Uterus (tissue), 4 donors: ENCODE measurements at regions of chr3 and their contacts with region 1.

Region 1: DNA sequence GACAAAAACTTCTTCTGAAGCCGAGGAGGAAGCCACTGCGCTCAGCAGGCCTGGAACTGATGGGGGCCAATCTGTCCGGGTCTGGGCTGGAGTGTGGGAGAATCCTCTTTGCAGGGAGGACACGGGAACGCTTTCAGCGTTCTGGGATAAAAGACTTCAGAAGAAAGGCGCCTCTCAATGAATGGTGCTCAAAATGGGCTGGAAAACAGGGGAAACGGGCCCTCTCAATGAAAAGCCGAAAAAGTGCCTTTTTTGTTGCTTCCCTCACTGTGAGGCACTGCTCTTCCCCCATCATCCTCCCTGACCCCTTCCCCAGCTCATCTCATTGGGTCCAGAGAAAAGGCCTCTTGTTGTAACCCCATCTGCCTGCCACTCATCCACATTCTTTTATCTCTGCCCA is 119.5 kb upstream of the LRIG1 start:
- DNase-seq: no peak
- H3K4me3 ChIP-seq: no peak overlapping the region
- H3K27ac ChIP-seq: no peak overlapping the region
- H3K4me1 ChIP-seq: no peaks in the 10 kb centered on the region
- H3K27me3 ChIP-seq: no peaks in the 10 kb centered on the region
- CTCF ChIP-seq: no peak
- POLR2A ChIP-seq: no peak

Region 2: GRCh38 chr3:64691051-64691450 is 1929.2 kb before region 1 on chr3:
- intact Hi-C with region 1: loop called (anchors 5 kb)
- DNase-seq: peak in 1 of 2 donors; percentile 54
- H3K4me3 ChIP-seq: no peak overlapping the region
- H3K27ac ChIP-seq: peak overlapping the region; percentile 12 to 20
- H3K4me1 ChIP-seq: peaks cover 0 to 5% of the 10 kb centered on the region in 2 donors
- H3K27me3 ChIP-seq: no peaks in the 10 kb centered on the region
- CTCF ChIP-seq: no peak
- POLR2A ChIP-seq: no peak